GM12878 (cell line): ENCODE measurements at regions of chr3 and their contacts with region 1.

Region 1: GRCh38 chr3:139923440-139923839 is 11.5 kb upstream of the CLSTN2 start:
- DNase-seq: no peak
- ATAC-seq: no peak
- H3K4me3 ChIP-seq: no peak overlapping the region
- H3K27ac ChIP-seq: no peak overlapping the region
- H3K4me1 ChIP-seq: no peaks in the 10 kb centered on the region
- H3K27me3 ChIP-seq: no peaks in the 10 kb centered on the region; a peak in 2 of 4 replicates
- CTCF ChIP-seq: no peak
- EP300 ChIP-seq: no peak
- POLR2A ChIP-seq: no peak
- RAD21 ChIP-seq: no peak

Region 2: DNA sequence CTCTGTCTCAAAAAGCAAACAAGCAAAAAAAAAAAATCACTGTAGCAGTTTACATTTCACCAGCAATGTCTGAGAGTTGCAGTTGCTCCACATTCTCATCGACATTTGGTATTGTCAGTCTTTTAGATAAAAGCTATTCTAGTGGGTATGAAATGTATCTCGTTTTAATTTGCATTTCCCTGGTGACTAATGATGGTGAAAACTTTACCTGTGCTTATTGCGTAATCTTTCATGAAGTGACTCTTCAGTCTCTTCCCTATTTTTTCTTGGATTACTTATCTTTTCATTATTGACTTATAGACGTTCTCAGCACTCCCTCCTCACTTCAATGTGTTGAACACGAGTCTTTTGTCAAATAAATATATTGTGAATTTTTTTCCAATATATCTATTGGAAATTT is 25.7 kb before region 1 on chr3:
- CTCF ChIA-PET with region 1: no interaction called
- POLR2A ChIA-PET with region 1: no interaction called
- RAD21 ChIA-PET with region 1: no interaction called
- SMC1A ChIA-PET with region 1: no interaction called
- in situ Hi-C with region 1: no loop called
- intact Hi-C with region 1: loop called (anchors 1 kb)
- DNase-seq: no peak
- ATAC-seq: no peak
- H3K4me3 ChIP-seq: no peak overlapping the region
- H3K27ac ChIP-seq: no peak overlapping the region
- H3K4me1 ChIP-seq: no peaks in the 10 kb centered on the region
- H3K27me3 ChIP-seq: no peaks in the 10 kb centered on the region
- CTCF ChIP-seq: no peak
- EP300 ChIP-seq: no peak
- POLR2A ChIP-seq: no peak
- RAD21 ChIP-seq: no peak

Region 3: GRCh38 chr3:140455521-140456214 is 532.2 kb after region 1 on chr3:
- CTCF ChIA-PET with region 1: no interaction called
- POLR2A ChIA-PET with region 1: no interaction called
- RAD21 ChIA-PET with region 1: no interaction called
- SMC1A ChIA-PET with region 1: no interaction called
- in situ Hi-C with region 1: no loop called
- intact Hi-C with region 1: no loop called
- DNase-seq: no peak
- ATAC-seq: no peak
- H3K4me3 ChIP-seq: no peak overlapping the region
- H3K27ac ChIP-seq: no peak overlapping the region
- H3K4me1 ChIP-seq: no peaks in the 10 kb centered on the region
- H3K27me3 ChIP-seq: peaks cover 0 to 3% of the 10 kb centered on the region in 2 experiments; a peak in 2 of 4 replicates
- CTCF ChIP-seq: no peak
- EP300 ChIP-seq: no peak
- POLR2A ChIP-seq: no peak
- RAD21 ChIP-seq: no peak